ENCODE measurements at regions of chr4 and their contacts with region 1.

Region 1: DNA sequence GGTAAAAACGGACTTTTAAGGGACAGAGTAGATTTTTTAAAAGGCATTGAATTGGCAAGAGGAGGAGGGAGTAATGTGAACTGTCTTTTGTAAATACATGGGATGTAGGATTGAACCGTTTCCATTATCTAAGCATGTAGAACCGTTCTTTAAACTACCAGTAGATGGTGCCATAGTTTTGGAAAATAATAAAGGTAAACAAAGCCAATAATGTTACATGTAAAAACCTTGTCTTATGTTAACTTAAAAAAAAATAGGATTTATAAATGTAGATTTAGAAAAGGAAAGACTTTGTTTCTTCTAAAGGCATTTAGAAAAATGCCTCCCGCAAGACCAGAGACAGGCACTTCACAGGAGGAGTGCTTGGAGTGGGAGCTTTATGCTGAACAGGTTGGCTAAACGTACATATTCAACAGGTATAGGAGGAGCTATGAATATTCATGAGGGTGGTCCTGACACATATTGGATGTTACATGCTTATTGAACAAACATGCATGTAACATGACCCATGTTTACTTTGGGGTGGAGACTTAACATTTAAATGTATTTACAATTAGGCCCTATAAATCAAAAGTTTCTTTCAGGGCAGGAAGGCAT is 45.5 kb upstream of the FAM241A start:
- DNase-seq: no peak
- H3K4me3 ChIP-seq: no peak overlapping the region
- H3K27ac ChIP-seq: no peak overlapping the region
- H3K4me1 ChIP-seq: no peaks in the 10 kb centered on the region
- H3K27me3 ChIP-seq: no peaks in the 10 kb centered on the region
- CTCF ChIP-seq: peak; percentile 23 to 59 (median 30)
- POLR2A ChIP-seq: no peak

Region 2: GRCh38 chr4:112231779-112232713 is 132.2 kb after region 1 on chr4 and contains the start of gene AP1AR:
- intact Hi-C with region 1: loop called (anchors 5 kb)
- DNase-seq: peak; percentile 85
- H3K4me3 ChIP-seq: peak within 1 kb of the TSS; percentile 83
- H3K27ac ChIP-seq: peak within 1 kb of the TSS; percentile 91 to 95
- H3K4me1 ChIP-seq: peaks cover 12% of the 10 kb centered on the region
- H3K27me3 ChIP-seq: no peaks in the 10 kb centered on the region
- CTCF ChIP-seq: peak in 1 of 3 experiments; percentile 24
- POLR2A ChIP-seq: no peak
- total RNA-seq, gene AP1AR: 24.6 to 29.4 TPM

Measured in testis (tissue), 5 donors.